Natural killer cell (primary cell): ENCODE measurements at regions of chr1 and their contacts with region 1.

Region 1: DNA sequence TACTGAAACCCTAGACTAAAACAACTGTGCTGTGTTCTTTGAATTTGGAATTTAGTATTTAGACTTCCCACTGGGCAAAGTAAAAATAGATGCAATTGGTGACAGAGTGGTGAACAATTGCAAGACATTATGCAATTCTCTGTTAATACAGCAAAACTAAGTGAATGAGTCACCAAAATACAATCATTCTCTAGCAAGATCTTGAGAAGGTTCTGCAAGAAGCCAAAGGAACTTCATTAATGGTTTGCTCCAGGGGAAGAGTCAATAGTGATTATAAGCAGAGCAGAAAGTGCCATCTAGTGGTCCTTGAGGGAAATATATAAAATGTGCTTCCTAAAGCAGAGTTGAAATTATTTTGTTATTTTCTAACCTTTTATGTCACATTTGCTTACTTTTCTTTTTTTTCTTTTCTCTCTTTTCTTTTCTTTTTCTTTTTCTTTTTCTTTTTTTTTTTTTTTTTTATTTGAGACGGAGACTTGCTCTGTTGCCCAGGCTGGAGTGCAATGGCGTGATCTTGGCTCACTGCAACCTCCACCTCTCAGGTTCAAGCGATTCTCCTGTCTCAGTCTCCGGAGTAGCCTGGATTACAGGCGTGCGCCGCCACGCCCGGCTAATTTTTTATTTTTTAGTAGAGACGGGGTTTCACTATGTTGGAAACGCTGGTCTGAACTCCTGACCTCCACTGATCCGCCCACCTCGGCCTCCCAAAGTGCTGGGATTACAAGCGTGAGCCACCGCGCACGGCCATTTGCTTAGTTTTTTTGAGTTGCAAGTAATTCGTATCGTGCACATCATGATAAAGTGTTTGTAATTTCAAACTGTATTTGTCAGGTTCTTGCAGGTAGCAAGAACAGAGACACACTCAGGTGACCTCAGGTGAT is 99.2 kb downstream of the CTH start:
- DNase-seq: peak in 1 of 2 donors; percentile 71
- ATAC-seq: peak; percentile 49 to 76 (median 74)
- H3K4me3 ChIP-seq: no peak overlapping the region
- H3K4me3 Mint-ChIP-seq: no peak overlapping the region
- H3K27ac ChIP-seq: no peak overlapping the region
- H3K27ac Mint-ChIP-seq: no peak overlapping the region
- H3K4me1 ChIP-seq: no peaks in the 10 kb centered on the region
- H3K4me1 Mint-ChIP-seq: no peaks in the 10 kb centered on the region
- H3K27me3 ChIP-seq: no peaks in the 10 kb centered on the region
- H3K27me3 Mint-ChIP-seq: peaks cover 6 to 9% of the 10 kb centered on the region in 2 donors
- CTCF ChIP-seq: peak; percentile 80

Region 2: DNA sequence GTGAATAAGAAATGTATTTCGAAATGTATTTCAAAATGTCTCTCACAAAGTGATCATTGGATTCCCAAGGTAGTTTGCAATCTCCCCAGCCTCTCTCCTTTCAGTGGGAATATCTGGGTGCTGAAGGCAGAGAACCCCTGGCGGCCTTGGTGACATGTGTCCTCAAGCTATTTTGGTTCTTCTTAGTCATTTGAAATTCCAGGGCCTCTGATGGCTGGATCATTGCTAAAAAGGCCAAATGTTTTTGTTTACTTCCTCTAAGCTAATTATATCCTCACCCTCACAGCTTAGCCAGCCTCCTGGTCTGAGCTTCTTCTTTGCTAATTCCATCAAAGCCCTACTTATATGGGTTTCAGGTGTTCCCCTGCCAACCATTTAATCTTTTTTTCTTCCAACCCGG is 376.1 kb before region 1 on chr1:
- intact Hi-C with region 1: loop called (anchors 1 kb)
- DNase-seq: no peak
- ATAC-seq: no peak
- H3K4me3 ChIP-seq: no peak overlapping the region
- H3K4me3 Mint-ChIP-seq: no peak overlapping the region
- H3K27ac ChIP-seq: no peak overlapping the region
- H3K27ac Mint-ChIP-seq: no peak overlapping the region
- H3K4me1 ChIP-seq: no peaks in the 10 kb centered on the region
- H3K4me1 Mint-ChIP-seq: peaks cover 0 to 5% of the 10 kb centered on the region in 2 donors
- H3K27me3 ChIP-seq: no peaks in the 10 kb centered on the region
- H3K27me3 Mint-ChIP-seq: peaks cover 0 to 8% of the 10 kb centered on the region in 2 donors
- CTCF ChIP-seq: no peak

Region 3: DNA sequence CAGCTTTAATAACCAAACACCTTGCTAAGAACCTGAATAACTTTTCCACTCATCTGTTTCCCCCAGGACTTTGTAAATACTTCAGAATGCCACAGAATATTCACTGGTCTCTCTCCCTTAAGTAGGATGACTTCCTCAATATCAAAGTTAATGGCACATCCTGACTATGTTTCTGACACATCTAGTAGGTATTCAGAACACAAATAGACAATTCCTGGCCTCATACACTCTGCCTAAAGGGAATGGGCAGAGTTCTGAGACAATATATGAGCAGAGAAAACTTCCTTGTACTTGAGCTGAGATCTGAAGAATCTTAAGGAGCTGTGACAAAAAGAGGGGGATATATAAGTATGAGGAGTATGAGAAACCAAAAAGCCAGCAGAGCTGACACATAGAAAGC is 190.5 kb before region 1 on chr1:
- intact Hi-C with region 1: loop called (anchors 10 kb)
- DNase-seq: no peak
- ATAC-seq: no peak
- H3K4me3 ChIP-seq: no peak overlapping the region
- H3K4me3 Mint-ChIP-seq: no peak overlapping the region
- H3K27ac ChIP-seq: no peak overlapping the region
- H3K27ac Mint-ChIP-seq: peak overlapping the region in 1 of 2 donors; percentile 10
- H3K4me1 ChIP-seq: no peaks in the 10 kb centered on the region
- H3K4me1 Mint-ChIP-seq: peaks cover 16% of the 10 kb centered on the region in 2 donors
- H3K27me3 ChIP-seq: no peaks in the 10 kb centered on the region
- H3K27me3 Mint-ChIP-seq: no peaks in the 10 kb centered on the region
- CTCF ChIP-seq: no peak